ENCODE measurements at regions of chr10 and their contacts with region 1.

Region 1: GRCh38 chr10:34723750-34724149 is 91.3 kb downstream of the PARD3 start:
- DNase-seq: peak in 1 of 2 donors; percentile 35
- ATAC-seq: peak; percentile 71 to 84
- H3K4me3 ChIP-seq: no peak overlapping the region
- H3K27ac ChIP-seq: peak overlapping the region in 1 of 4 donors; percentile 11
- H3K4me1 ChIP-seq: peaks cover 34 to 62% of the 10 kb centered on the region in 2 donors
- H3K27me3 ChIP-seq: no peaks in the 10 kb centered on the region
- CTCF ChIP-seq: peak in 4 of 5 experiments; percentile 29 to 52 (median 50)
- POLR2A ChIP-seq: no peak

Region 2: GRCh38 chr10:34789966-34790506 is 66.3 kb after region 1 on chr10:
- in situ Hi-C with region 1: no loop called
- intact Hi-C with region 1: loop called (anchors 5 kb)
- DNase-seq: no peak
- ATAC-seq: no peak
- H3K4me3 ChIP-seq: no peak overlapping the region
- H3K27ac ChIP-seq: no peak overlapping the region
- H3K4me1 ChIP-seq: peaks cover 57 to 73% of the 10 kb centered on the region in 2 donors
- H3K27me3 ChIP-seq: no peaks in the 10 kb centered on the region
- CTCF ChIP-seq: no peak
- POLR2A ChIP-seq: no peak

Region 3: GRCh38 chr10:34954168-34954567 is 230.4 kb after region 1 on chr10:
- in situ Hi-C with region 1: no loop called
- intact Hi-C with region 1: loop called (anchors 10 kb)
- DNase-seq: no peak
- ATAC-seq: no peak
- H3K4me3 ChIP-seq: no peak overlapping the region
- H3K27ac ChIP-seq: no peak overlapping the region
- H3K4me1 ChIP-seq: peaks cover 3 to 5% of the 10 kb centered on the region in 2 donors
- H3K27me3 ChIP-seq: no peaks in the 10 kb centered on the region
- CTCF ChIP-seq: no peak
- POLR2A ChIP-seq: no peak

Region 4: GRCh38 chr10:34960983-34961382 is 237.2 kb after region 1 on chr10:
- in situ Hi-C with region 1: loop called in 1 of 4 experiments (anchors 10 kb)
- intact Hi-C with region 1: loop called (anchors 10 kb)
- DNase-seq: peak; percentile 15 to 27
- ATAC-seq: peak; percentile 76 to 93
- H3K4me3 ChIP-seq: no peak overlapping the region
- H3K27ac ChIP-seq: no peak overlapping the region
- H3K4me1 ChIP-seq: no peaks in the 10 kb centered on the region
- H3K27me3 ChIP-seq: no peaks in the 10 kb centered on the region
- CTCF ChIP-seq: peak in 2 of 5 experiments; percentile 43
- POLR2A ChIP-seq: no peak

Measured in gastrocnemius medialis (tissue), 4 donors.